Activated naive CD4-positive, alpha-beta T cell treated with anti-CD3 and anti-CD28 coated beads for 36 hours (primary cell): ENCODE measurements at regions of chr6 and their contacts with region 1.

Region 1: GRCh38 chr6:157893238-157893637 is 70.2 kb downstream of the SNX9 start:
- DNase-seq: peak; percentile 77
- H3K4me3 Mint-ChIP-seq: no peak overlapping the region
- H3K27ac Mint-ChIP-seq: peak overlapping the region; percentile 88
- H3K4me1 Mint-ChIP-seq: peaks cover 59% of the 10 kb centered on the region
- H3K27me3 Mint-ChIP-seq: no peaks in the 10 kb centered on the region

Region 2: DNA sequence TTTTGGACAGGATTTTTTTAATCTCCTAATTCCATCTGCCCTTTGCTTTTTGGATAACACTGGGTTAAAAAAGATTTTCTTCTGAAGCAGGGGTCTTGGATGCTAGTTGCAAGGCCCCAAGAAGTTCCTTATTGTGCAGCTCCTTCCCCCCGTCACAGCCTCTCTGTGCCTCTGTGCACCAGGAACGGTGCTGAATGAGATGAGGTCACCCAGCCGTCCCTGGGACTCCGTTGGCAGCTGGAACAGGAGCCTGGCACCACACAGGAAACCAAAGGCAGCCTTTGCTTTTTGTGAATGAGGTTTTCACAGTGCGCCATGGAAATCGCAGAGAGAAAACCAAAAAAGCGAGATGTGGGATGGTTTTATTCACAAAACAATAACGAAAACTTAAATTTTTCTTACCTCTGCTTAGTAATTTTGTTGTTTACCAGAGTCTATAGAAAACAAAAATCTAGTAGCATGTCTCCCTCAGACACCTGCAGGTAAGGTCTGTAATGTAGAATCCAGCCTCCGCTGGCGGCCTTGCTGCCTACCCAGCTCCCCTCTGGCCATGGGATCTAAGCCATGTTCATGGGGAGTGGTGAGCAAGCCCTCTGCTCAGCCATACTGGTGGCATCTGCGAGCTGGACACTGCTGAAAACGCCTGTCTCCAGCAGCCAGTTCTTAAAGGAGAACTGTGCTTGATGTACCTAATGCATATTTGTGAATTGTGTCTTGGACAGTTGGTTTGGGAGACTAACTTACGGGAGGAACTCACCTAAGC is 48.0 kb after region 1 on chr6:
- CTCF ChIA-PET with region 1: no interaction called
- intact Hi-C with region 1: loop called (anchors 2 kb)
- DNase-seq: no peak
- H3K4me3 Mint-ChIP-seq: no peak overlapping the region
- H3K27ac Mint-ChIP-seq: peak overlapping the region; percentile 68
- H3K4me1 Mint-ChIP-seq: peaks cover 33% of the 10 kb centered on the region
- H3K27me3 Mint-ChIP-seq: no peaks in the 10 kb centered on the region